ENCODE measurements at regions of chr15 and their contacts with region 1.

Region 1: GRCh38 chr15:73617913-73618312 is 15.3 kb downstream of the NPTN start:
- DNase-seq: no peak
- H3K4me3 ChIP-seq: no peak overlapping the region
- H3K27ac ChIP-seq: no peak overlapping the region
- H3K4me1 ChIP-seq: peaks cover 50% of the 10 kb centered on the region
- H3K27me3 ChIP-seq: no peaks in the 10 kb centered on the region
- CTCF ChIP-seq: no peak
- POLR2A ChIP-seq: no peak

Region 2: DNA sequence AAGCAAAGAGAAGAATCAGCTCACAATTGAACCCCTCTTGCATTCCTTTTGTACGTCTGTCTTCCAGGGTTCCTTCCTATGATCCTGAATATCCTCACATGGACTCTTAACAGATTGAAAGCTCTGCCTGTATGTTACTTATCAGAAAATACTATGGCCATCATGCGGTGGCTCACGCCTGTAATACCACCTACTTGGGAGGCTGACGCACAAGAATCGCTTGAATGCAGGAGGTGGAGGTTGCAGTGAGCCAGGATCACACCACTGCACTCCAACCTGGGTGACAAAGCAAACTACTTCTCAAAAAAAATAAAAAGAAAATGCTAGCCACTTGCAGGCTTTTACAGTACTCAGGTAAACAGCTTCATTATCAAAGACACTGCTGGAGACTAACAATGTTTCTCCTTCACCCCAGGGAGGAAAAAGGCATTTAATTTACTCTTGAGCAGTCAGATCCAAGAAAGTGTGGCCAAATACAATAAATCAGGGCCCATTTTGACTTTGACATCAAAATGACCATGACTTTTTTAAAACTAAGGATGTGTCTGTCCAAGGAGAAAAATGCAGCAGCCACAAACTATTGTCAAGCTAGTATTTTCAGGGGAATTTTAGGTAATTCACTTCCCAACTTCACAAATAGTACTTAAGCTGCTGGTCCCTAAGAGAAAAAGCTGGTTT is 12.0 kb before region 1 on chr15:
- intact Hi-C with region 1: loop called (anchors 1 kb)
- DNase-seq: no peak
- H3K4me3 ChIP-seq: no peak overlapping the region
- H3K27ac ChIP-seq: no peak overlapping the region
- H3K4me1 ChIP-seq: peaks cover 84% of the 10 kb centered on the region
- H3K27me3 ChIP-seq: no peaks in the 10 kb centered on the region
- CTCF ChIP-seq: no peak
- POLR2A ChIP-seq: no peak

Measured in vagina (tissue), 2 donors.